ENCODE measurements at regions of chr15 and their contacts with region 1.

Region 1: GRCh38 chr15:59399465-59400102 is 26.9 kb upstream of the MYO1E start:
- DNase-seq: no peak
- ATAC-seq: no peak
- H3K4me3 ChIP-seq: no peak overlapping the region
- H3K27ac ChIP-seq: no peak overlapping the region
- H3K4me1 ChIP-seq: no peaks in the 10 kb centered on the region
- H3K27me3 ChIP-seq: no peaks in the 10 kb centered on the region

Region 2: DNA sequence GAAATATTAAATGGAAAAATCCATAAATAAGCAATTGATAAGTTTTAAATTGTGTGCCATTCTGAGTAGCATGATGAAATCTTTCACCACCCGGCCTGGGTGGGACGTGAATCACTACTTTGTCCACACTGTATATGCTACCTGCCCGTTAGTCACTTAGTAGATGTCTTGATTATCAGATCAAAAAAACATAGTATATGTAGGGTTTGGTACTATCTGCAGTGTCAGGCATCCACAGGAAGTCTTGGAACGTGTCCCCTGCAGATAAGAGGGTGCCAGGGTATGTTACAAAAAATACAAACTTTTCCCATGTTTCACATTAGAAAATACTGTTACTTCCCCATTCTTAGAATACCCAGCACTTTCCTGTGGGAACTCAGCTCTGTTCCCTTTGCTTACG is 73.6 kb after region 1 on chr15:
- intact Hi-C with region 1: loop called in 1 of 2 experiments (anchors 10 kb)
- DNase-seq: no peak
- ATAC-seq: no peak
- H3K4me3 ChIP-seq: no peak overlapping the region
- H3K27ac ChIP-seq: no peak overlapping the region
- H3K4me1 ChIP-seq: no peaks in the 10 kb centered on the region
- H3K27me3 ChIP-seq: no peaks in the 10 kb centered on the region